WTC11 (cell line): ENCODE measurements at regions of chr17 and their contacts with region 1.

Region 1: DNA sequence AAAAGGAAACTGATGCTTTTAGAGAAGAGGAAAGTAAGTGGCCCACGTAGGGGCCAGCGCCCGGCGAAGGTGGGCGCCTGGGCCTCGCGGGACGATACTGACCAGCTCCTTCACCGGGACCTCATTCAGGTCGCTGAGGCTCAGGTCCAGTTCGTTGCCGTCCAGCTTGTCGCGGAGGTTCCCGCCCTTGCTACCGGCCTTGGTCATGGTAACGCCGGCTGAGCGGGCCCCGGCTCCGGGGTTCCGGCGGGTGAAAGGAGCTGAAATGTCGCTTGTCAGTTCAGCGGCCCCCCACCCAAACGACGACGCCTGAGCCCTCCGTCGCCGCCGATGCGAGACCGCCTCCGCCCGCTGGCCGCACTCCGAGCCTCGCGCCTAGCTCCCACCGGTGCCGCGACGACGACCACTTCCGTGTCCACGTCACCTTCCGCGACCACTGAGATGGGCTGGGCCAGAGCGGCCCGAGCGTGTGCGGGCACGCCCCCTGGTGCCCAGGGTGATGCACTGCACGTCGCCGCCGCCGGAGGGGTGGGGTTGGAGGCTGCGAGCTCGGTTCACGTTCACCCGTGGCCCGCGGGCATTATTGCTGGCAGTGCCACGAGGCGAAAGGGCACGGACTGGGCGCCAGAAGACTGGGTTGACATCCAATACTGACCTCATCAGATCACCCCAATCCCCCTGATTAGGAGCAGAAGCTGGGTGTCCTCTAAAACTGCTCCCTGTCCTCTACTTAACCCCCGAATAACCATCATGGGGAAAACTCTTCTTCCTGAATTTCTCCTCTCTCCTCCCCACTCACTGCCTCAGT is at the start of gene LRRC59:
- DNase-seq: peak; percentile 88
- ATAC-seq: peak; percentile 93
- H3K4me3 Mint-ChIP-seq: peak within 1 kb of the TSS; percentile 93
- H3K27ac Mint-ChIP-seq: no peak within 1 kb of the TSS
- H3K4me1 Mint-ChIP-seq: peaks cover 10% of the 10 kb centered on the region
- H3K27me3 Mint-ChIP-seq: peaks cover 7% of the 10 kb centered on the region
- CTCF ChIP-seq: peak; percentile 98
- total RNA-seq, gene LRRC59: 89.3 to 108 TPM (median 90.4 TPM) in 3 replicates

Region 2: DNA sequence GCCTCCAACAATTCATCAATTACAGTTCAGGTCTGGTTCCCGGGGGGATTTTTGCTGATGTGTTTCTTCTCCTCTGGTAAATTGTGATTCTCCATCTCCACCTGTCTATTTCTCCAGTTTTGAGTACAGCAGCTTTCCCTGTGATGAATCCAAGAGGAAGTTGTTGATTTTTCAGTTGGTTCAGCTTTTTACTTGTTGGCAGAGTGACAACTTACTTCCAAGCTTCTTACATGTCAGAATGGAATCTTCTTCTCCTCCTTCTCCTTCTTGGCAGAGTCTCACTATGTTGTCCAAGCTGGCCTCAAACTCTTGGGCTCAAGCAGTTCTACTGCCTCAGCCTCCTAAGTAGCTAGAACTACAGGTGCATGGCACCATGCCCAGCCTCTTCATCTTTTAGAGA is 156.5 kb before region 1 on chr17:
- CTCF ChIA-PET with region 1: no interaction called
- POLR2A ChIA-PET with region 1: no interaction called
- DNase-seq: no peak
- ATAC-seq: no peak
- H3K4me3 Mint-ChIP-seq: no peak overlapping the region
- H3K27ac Mint-ChIP-seq: no peak overlapping the region
- H3K4me1 Mint-ChIP-seq: no peaks in the 10 kb centered on the region
- H3K27me3 Mint-ChIP-seq: peaks cover 8% of the 10 kb centered on the region; the same call in 1 of the 2 replicates
- CTCF ChIP-seq: no peak

Region 3: GRCh38 chr17:50331085-50331791 is 66.1 kb before region 1 on chr17:
- CTCF ChIA-PET with region 1: interaction called, 18 read pairs
- POLR2A ChIA-PET with region 1: no interaction called
- DNase-seq: no peak
- ATAC-seq: no peak
- H3K4me3 Mint-ChIP-seq: no peak overlapping the region
- H3K27ac Mint-ChIP-seq: no peak overlapping the region
- H3K4me1 Mint-ChIP-seq: peaks cover 17% of the 10 kb centered on the region
- H3K27me3 Mint-ChIP-seq: no peaks in the 10 kb centered on the region
- CTCF ChIP-seq: no peak

Region 4: DNA sequence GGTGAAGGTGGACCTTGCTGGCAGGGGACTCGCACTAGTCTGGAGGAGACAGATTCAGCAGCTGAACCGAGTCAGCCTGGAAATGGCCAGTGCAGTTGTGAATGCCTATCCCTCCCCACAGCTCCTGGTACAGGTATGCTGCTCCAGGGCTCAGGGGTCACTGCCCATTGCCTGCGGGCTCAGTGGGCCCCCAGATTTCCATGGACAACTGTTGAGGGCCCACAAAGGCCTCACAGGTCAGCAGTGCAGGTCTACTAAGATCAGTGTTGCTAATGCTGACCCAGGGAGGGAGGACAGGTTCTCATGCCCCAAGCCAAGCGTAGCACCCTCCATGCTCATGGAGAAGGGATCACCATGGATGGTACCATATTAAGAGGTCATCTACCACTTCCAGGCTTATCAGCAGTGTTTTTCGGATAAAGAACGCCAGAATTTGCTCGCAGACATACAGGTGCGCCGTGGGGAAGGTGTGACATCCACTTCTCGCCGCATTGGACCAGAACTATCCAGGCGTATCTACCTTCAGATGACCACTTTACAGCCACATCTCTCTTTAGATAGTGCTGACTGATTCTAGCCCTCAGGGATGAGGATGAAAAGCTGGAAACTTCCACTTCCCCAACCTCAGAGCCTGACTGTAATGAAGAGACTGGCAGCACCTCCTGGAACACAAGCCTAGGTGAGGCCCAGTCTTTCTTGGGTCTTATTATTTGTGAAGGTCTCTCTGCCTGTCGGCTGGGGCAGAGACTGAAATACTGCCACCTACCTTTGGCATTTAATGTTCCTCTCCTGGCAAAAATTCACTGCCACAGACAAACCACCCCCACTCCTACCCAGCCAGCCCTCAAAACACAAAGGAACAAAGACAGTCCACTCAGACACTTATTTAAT is 16.7 kb before region 1 on chr17:
- CTCF ChIA-PET with region 1: interaction called, 51 read pairs
- POLR2A ChIA-PET with region 1: no interaction called
- DNase-seq: no peak
- ATAC-seq: peak; percentile 28; the same call in 1 of the 2 replicates
- H3K4me3 Mint-ChIP-seq: no peak overlapping the region
- H3K27ac Mint-ChIP-seq: no peak overlapping the region
- H3K4me1 Mint-ChIP-seq: no peaks in the 10 kb centered on the region
- H3K27me3 Mint-ChIP-seq: no peaks in the 10 kb centered on the region; the same call in 1 of the 2 replicates
- CTCF ChIP-seq: no peak

Region 5: DNA sequence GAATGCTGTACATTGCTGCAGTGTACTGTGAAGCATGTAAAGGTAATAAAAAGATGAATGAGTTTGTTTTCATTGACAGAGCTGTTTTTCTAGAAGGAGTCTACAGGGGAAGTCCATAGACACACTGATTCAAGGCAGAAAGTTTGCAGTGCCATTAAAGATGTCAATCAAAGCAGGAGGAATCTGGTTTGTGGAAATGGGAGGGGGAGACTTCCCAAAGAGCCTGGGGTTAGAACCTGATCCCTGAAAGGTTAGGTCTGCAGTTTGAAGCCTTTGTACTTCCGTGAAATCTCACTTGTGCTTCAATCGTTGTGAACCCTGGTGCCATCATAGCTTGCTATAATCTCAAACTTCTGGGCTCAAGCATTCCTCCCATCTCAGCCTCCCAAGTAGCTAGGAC is 33.9 kb after region 1 on chr17:
- CTCF ChIA-PET with region 1: interaction called, 49 read pairs
- POLR2A ChIA-PET with region 1: interaction called, 6 read pairs
- DNase-seq: no peak
- ATAC-seq: no peak
- H3K4me3 Mint-ChIP-seq: no peak overlapping the region
- H3K27ac Mint-ChIP-seq: no peak overlapping the region
- H3K4me1 Mint-ChIP-seq: peaks cover 22% of the 10 kb centered on the region
- H3K27me3 Mint-ChIP-seq: no peaks in the 10 kb centered on the region
- CTCF ChIP-seq: no peak

Region 6: GRCh38 chr17:50452610-50453300 is 55.4 kb after region 1 on chr17:
- CTCF ChIA-PET with region 1: interaction called, 11 read pairs
- POLR2A ChIA-PET with region 1: no interaction called
- DNase-seq: no peak
- ATAC-seq: no peak
- H3K4me3 Mint-ChIP-seq: no peak overlapping the region
- H3K27ac Mint-ChIP-seq: no peak overlapping the region
- H3K4me1 Mint-ChIP-seq: no peaks in the 10 kb centered on the region
- H3K27me3 Mint-ChIP-seq: no peaks in the 10 kb centered on the region
- CTCF ChIP-seq: no peak

Region 7: DNA sequence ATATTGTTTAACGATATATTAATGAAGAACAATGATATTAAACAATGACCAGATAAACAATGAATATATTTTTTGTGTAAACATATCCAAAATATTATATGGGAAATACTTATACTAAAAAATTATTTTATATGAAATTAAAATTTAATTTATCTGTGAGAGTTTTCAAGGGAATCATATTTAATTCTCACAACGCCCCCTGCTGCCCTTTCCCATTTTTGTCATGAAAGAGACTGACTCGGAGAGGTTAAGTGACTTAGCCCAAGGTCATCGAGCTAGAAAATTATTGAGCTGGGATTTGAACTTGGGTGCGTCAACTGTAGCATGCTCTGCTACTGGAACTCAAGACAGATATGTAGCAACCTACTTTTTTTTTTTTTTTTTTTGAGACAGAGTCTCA is 103.7 kb after region 1 on chr17:
- CTCF ChIA-PET with region 1: interaction called, 16 read pairs
- POLR2A ChIA-PET with region 1: no interaction called
- DNase-seq: no peak
- ATAC-seq: no peak
- H3K4me3 Mint-ChIP-seq: no peak overlapping the region
- H3K27ac Mint-ChIP-seq: no peak overlapping the region
- H3K4me1 Mint-ChIP-seq: peaks cover 8% of the 10 kb centered on the region
- H3K27me3 Mint-ChIP-seq: no peaks in the 10 kb centered on the region
- CTCF ChIP-seq: peak; percentile 30; the same call in 1 of the 2 replicates

Region 8: DNA sequence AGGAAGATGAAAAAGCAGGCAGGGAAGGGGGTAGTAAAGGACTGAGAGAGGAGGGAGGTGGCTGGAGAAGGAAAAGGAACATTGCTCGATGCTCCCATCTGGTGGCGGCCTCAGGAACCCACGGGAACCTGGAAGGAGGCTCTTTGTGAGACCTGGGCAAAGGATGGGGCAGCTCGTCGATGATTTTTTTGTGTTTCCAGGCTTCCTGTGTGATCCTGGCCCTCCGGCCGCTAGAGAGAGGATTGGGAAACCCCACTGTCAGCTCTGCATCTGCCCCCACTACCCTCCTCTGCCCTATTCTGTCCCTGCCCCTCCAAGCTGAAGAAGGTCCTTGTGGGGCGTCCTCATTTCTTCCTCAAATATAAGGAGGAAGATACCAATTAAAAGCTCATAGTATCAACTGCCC is 444.6 kb after region 1 on chr17:
- CTCF ChIA-PET with region 1: no interaction called
- POLR2A ChIA-PET with region 1: no interaction called
- DNase-seq: peak; percentile 83
- ATAC-seq: peak; percentile 90
- H3K4me3 Mint-ChIP-seq: no peak overlapping the region
- H3K27ac Mint-ChIP-seq: no peak overlapping the region
- H3K4me1 Mint-ChIP-seq: peaks cover 9% of the 10 kb centered on the region
- H3K27me3 Mint-ChIP-seq: no peaks in the 10 kb centered on the region
- CTCF ChIP-seq: 0 out of 2 replicates have a peak, but pooled peaks have one; percentile 44

Region 9: DNA sequence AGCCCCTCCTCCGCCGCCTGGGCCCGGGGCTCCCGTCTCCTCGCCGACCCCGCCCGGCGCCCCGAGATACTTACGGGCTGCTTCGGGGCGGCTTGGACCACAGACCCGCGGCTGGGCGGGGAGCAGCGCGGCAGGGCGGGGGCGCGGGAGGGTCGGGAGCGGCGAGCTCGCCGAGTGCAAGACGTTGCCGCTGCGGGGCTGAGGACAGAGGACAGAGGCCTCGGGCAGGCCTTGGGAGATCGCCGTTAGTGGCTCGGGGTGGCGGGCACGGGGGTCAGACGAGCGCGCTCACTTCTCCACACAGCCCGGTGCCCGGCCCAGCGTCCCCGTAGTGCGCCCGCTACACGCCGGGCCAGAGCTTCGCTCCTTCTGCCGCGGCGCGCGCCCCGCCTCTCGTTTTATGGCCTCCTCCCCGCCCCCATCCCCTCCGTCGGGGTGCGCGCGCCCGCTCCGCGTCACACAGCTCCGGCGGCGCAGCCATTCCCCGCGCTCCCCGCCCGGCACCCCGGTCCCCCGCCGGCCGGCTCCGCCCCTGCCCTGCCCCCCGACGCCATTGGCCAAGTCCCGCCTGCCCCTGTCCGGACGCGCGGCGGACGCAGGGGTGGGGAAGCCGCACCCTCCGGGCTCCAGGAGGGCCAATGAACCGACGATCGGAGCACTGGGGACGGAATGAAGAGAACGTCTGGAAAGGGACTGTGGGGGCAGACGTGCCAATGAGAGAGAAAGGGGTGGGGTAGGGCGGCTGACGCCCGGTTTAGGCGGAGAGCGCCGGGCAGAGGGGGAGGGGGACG is 468.9 kb after region 1 on chr17 and contains the start of gene TOB1:
- CTCF ChIA-PET with region 1: no interaction called
- POLR2A ChIA-PET with region 1: no interaction called
- DNase-seq: peak; percentile 97
- ATAC-seq: peak; percentile 78
- H3K4me3 Mint-ChIP-seq: peak within 1 kb of the TSS; percentile 96
- H3K27ac Mint-ChIP-seq: peak within 1 kb of the TSS; percentile 100
- H3K4me1 Mint-ChIP-seq: peaks cover 30% of the 10 kb centered on the region
- H3K27me3 Mint-ChIP-seq: no peaks in the 10 kb centered on the region
- CTCF ChIP-seq: no peak
- total RNA-seq, gene TOB1: 33.5 to 37.9 TPM (median 36.0 TPM) in 3 replicates